ENCODE measurements at regions of chr9 and their contacts with region 1.

Region 1: DNA sequence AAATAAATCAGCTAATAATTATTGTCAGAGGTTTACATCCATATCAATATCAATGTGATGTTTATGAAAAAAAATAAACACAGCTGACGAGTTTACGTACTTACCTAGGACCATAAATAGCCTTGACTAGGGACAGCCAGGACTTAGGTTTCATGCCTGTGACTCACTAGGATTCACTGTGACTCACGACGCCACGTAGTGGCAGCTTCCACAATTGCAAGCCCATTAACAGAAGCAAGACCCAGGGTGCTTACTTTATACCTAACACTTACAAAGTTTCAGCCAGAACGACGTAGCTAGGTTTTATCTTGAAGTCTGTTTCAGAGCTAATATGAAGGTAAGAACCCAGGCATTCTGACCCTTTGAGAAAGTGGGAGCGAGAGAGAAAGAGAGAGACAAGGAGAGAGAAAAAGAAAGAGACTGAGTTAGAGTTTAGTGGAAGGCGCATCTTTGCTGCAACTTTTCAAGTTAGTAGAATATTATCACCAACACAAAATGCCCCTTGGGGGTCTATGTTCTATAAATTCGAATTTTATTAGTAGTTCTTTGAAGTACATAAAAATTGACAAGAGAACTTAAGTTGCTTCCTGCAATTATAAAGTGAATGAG is 191.2 kb downstream of the GNA14 start:
- DNase-seq: peak; percentile 77
- H3K4me3 ChIP-seq: no peak overlapping the region
- H3K27ac ChIP-seq: no peak overlapping the region
- H3K4me1 ChIP-seq: no peaks in the 10 kb centered on the region
- CTCF ChIP-seq: peak; percentile 88

Region 2: DNA sequence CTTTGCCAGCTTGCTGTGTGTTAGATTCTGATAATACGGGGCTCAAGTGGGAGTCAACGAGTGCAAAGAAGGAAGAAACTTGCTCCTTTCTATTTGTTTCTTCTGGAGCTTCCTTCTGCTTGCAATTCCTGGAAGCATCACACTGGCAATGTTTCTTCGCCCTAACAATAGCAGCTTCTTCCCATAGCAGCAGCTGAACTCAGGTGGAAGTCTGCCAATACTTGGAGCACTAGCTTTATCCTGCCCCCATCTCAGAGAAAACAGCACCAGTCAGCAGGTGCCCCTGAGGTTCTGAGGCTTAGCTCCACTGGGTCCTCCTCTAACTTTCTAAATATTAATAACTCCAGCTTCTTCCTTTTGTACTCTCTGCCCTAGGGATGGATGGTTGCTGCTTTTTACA is 424.6 kb before region 1 on chr9:
- CTCF ChIA-PET with region 1: no interaction called
- POLR2A ChIA-PET with region 1: no interaction called
- intact Hi-C with region 1: no loop called
- DNase-seq: no peak
- H3K4me3 ChIP-seq: no peak overlapping the region
- H3K27ac ChIP-seq: no peak overlapping the region
- H3K4me1 ChIP-seq: no peaks in the 10 kb centered on the region
- CTCF ChIP-seq: no peak

Region 3: GRCh38 chr9:77163884-77164283 is 293.0 kb before region 1 on chr9:
- CTCF ChIA-PET with region 1: no interaction called
- POLR2A ChIA-PET with region 1: no interaction called
- intact Hi-C with region 1: loop called (anchors 5 kb)
- DNase-seq: no peak
- H3K4me3 ChIP-seq: no peak overlapping the region
- H3K27ac ChIP-seq: no peak overlapping the region
- H3K4me1 ChIP-seq: no peaks in the 10 kb centered on the region
- CTCF ChIP-seq: no peak

Region 4: DNA sequence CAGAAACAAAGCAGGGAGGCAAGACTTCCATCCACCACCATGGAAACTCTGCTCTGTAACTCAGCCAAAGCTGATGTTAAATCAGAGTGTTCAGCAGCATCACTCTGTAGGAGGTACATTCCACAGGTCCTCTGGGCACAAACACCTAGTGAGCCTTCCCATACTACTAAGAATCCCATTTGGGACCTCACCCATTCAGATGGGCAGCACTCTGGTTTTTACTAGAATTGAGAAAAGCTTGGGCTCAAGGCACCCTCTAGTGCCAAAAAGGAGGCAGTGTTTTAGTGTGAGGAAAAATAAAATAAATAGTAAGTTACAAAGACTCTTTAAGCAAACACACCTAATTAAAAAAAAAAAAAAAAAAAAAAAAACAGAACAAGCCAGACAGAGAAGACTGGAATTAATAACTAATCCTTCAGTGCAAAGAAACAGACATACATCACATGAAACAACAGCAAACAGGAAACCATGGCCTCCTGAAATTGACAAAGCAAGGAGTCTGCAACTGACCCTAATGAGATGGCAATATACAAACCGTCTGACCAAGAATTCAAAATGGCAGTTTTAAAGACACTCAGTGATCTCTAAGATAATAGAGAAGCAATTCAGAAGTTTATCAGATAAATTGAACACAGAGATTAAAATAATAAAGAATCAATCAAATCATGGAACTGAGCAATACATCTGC is 31.6 kb after region 1 on chr9:
- CTCF ChIA-PET with region 1: no interaction called
- POLR2A ChIA-PET with region 1: interaction called, 3 read pairs
- intact Hi-C with region 1: loop called (anchors 1 kb)
- DNase-seq: peak; percentile 5
- H3K4me3 ChIP-seq: no peak overlapping the region
- H3K27ac ChIP-seq: no peak overlapping the region
- H3K4me1 ChIP-seq: no peaks in the 10 kb centered on the region
- CTCF ChIP-seq: peak; percentile 59

Region 5: GRCh38 chr9:77751341-77752091 is 294.6 kb after region 1 on chr9:
- CTCF ChIA-PET with region 1: no interaction called
- POLR2A ChIA-PET with region 1: no interaction called
- intact Hi-C with region 1: loop called (anchors 5 kb)
- DNase-seq: peak; percentile 33
- H3K4me3 ChIP-seq: no peak overlapping the region
- H3K27ac ChIP-seq: no peak overlapping the region
- H3K4me1 ChIP-seq: no peaks in the 10 kb centered on the region
- CTCF ChIP-seq: peak; percentile 75